Right ventricle myocardium inferior (tissue), 1 donor: ENCODE measurements at regions of chr3 and their contacts with region 1.

Region 1: DNA sequence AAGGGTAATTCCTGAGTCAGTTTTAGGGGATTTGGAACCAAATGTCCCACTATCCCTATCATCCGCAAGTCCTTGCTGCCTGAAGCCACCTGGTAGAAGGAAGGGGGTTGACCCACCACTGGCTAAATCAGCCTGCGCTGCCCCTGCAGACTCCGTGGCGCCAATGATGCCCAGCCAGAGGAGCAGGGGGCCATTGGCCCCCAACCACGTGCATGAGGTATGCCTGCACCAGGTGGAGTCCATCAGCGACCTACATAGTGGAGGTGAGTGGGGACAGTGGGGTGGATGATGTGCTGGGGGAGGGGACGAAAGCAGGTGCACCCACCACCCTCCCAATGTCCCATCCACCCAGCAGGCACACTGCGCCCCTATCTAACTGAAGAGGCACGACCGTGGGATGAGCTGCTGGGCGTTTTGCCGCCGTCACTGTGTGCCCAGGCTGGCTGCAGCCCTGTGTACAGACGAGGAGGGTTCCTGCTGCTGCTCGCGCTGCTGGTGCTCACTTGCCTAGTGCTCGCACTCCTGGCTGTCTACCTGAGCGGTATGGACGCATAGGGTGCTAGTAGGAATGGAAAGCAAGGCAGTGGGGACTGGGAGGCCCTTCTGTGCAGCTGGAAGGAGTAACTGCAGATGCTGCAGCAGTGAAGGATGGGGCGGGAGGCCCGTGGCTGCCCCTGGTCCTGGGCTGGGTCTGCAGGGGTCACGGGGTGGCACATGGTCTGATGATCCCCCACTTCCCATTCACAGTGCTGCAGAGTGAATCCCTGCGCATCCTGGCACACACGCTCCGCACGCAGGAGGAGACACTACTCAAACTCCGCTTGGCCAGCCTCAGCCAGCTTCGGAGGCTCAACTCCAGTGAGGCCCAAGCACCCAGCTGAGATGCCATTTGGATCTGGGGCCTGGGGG is 5.7 kb downstream of the IFRD2 start:
- DNase-seq: no peak
- ATAC-seq: no peak

Region 2: DNA sequence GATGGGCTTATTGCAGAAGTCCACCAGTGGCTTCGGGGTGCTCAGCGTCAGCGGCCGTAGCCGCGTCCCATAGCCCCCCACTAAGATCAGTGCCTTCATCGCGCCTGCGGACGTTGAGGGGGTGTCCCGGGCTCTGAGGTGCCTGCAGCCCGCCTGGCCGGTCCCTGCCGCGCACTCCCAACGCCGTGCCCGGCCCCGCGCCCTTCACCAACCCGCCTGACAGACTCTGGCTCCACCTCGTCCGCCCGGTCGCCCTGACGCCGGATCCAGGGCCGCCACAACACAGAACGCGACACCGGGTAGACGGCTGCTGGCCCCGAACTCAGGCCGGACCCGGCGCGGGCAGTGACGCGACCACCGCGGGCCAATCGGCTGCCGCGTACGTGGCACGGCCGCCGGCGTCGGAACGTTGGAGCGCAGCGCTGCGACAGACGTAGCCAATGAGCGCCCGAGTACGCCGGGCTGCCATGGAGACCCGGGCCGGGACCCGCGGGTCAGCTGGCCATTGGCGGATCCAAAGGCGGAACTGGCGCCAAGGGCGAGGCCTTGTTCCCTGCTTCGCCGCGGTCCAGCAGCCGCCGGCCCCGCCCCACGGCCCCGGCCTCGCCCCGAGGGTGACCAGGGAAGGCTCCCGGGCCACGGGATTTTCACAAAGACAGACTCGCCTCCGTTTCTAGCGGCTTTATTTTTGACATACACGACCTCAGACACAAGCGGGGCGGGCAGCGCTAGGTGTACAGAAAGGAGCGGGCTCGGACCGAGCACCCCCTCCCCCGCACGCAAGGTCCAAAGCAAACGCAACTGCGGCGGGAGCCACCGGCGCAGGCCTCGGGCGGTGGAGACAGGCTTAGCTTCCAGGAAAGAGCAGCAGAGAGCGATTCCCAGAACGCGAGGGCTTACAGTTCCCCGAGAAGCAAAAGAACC is 562.7 kb before region 1 on chr3 and contains the start of gene GMPPB:
- intact Hi-C with region 1: loop called (anchors 5 kb)
- DNase-seq: peak; percentile 99
- ATAC-seq: peak; percentile 92
- total RNA-seq, gene GMPPB: 18.1 TPM

Region 3: DNA sequence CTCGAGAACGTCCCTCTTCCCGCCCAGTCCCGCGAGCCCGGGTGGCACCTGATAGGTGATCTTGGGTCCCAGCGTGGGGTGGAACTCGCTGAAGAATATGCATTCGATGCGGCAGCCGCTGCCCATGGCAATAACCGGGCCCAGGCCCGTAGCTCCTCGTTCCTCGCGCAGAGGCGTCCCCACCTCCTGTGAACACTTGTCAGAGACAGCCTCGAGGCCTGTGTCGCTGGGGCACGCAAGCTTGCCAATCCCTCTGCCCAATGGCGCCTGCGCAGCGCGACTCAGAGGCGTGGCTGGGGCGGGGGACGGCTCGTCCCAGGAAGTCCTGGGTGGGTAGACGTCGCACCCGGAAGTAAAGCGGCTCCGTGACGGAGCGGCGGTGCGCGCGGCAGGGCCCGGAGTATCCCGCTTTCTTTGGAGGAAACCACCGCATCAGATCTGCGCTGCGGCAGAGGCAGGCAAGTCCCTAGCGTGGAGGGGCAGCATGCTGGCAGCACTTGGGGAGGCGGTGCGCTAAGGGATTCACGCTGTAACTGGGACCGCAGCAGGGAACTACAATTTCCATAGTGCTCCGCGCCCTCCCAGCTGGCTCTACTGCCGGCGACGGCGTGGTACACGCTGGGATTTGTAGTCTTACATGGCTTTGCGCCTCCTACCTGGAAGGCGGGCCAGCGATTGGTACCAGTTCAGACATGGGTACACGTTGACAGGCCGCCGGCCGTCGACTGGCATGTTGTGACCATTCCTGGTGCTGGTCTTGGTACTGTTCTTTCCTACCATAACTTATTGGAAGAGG is 64.1 kb after region 1 on chr3 and contains the starts of genes CYB561D2 and NPRL2:
- intact Hi-C with region 1: no loop called
- DNase-seq: peak; percentile 99
- ATAC-seq: peak; percentile 95
- total RNA-seq, gene CYB561D2: 6.3 TPM
- total RNA-seq, gene NPRL2: 16.7 TPM